Ascending aorta (tissue), 2 donors: ENCODE measurements at regions of chr2 and their contacts with region 1.

Region 1: GRCh38 chr2:96816128-96816835 is at the start of gene CNNM3:
- DNase-seq: peak; percentile 87 to 98
- H3K4me3 ChIP-seq: peak within 1 kb of the TSS; percentile 88 to 98
- H3K27ac ChIP-seq: peak within 1 kb of the TSS; percentile 76 to 99
- H3K4me1 ChIP-seq: peaks cover 12 to 41% of the 10 kb centered on the region in 2 donors
- H3K27me3 ChIP-seq: no peaks in the 10 kb centered on the region
- CTCF ChIP-seq: peak; percentile 70 to 75 (median 71)
- total RNA-seq, gene CNNM3: 24.5 TPM

Region 2: GRCh38 chr2:96265840-96266679 is 550.2 kb before region 1 on chr2 and contains the starts of genes CIAO1 and TMEM127:
- intact Hi-C with region 1: loop called (anchors 10 kb)
- DNase-seq: peak; percentile 95 to 99
- H3K4me3 ChIP-seq: peak within 1 kb of the TSS; percentile 81 to 84
- H3K27ac ChIP-seq: peak within 1 kb of the TSS; percentile 94
- H3K4me1 ChIP-seq: peaks cover 15 to 38% of the 10 kb centered on the region in 2 donors
- H3K27me3 ChIP-seq: no peaks in the 10 kb centered on the region
- CTCF ChIP-seq: peak; percentile 20 to 57 (median 24)
- total RNA-seq, gene CIAO1: 127 TPM
- total RNA-seq, gene TMEM127: 61.9 TPM

Region 3: GRCh38 chr2:96638144-96639121 is 177.8 kb before region 1 on chr2 and contains the start of gene KANSL3:
- intact Hi-C with region 1: loop called (anchors 1 kb)
- DNase-seq: peak; percentile 38 to 93
- H3K4me3 ChIP-seq: peak within 1 kb of the TSS; percentile 85 to 89
- H3K27ac ChIP-seq: peak within 1 kb of the TSS; percentile 95 to 99
- H3K4me1 ChIP-seq: peaks cover 4 to 21% of the 10 kb centered on the region in 2 donors
- H3K27me3 ChIP-seq: no peaks in the 10 kb centered on the region
- CTCF ChIP-seq: peak in 2 of 3 experiments; percentile 10 to 19
- total RNA-seq, gene KANSL3: 56.1 TPM

Region 4: DNA sequence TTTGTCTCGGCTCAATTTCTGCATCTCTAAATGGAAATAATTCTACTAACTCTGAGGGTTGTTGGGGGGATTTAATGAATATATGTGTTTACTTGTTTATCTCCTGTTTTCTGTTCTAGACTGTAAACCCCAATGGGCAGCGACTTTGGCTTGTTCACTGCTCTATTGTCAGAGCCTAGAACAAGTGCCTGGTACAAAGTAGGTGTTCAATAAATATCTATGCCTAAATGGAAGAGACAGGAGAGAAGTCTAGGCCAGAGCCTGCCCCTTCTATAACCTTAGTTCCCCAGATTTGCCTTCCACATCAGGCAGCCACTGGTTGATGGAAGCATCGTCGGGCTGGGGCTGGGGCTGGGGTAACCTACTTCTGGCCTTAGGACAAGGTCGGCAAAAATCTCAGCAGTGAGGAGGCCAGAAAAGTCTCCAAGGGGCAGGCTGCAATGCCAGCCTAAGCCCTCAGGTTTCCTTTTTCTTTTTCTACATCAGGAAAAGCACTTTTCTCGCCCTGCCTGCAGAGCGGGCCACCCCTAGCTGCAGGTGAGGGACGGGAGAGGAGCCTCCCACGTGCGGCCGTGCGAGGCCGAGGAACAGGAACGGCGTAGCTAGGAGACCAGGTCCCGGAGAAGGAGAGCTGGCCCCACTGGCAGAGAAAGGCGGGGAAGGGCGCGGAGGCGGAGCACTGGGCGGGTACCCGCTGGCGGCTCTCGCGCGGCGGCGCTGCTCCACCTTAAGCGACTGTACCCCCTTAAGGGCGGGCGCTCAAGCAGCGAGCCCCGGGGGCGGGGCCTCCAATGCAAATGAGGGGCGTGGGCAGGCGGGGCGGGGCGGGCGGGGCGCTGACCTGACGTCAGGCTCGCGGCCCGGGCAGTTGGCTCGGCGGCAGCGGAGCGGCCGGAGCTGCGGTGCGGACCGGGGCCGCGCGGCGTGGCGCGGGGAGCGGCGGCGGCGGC is 56.0 kb before region 1 on chr2 and contains the start of gene CNNM4:
- intact Hi-C with region 1: loop called (anchors 1 kb)
- DNase-seq: peak; percentile 79 to 97
- H3K4me3 ChIP-seq: peak within 1 kb of the TSS; percentile 64 to 94
- H3K27ac ChIP-seq: peak within 1 kb of the TSS; percentile 64 to 87
- H3K4me1 ChIP-seq: peaks cover 10 to 20% of the 10 kb centered on the region in 2 donors
- H3K27me3 ChIP-seq: no peaks in the 10 kb centered on the region
- CTCF ChIP-seq: no peak
- total RNA-seq, gene CNNM4: 2.7 TPM

Region 5: GRCh38 chr2:96907115-96908041 is 91.1 kb after region 1 on chr2:
- intact Hi-C with region 1: loop called (anchors 1 kb)
- DNase-seq: peak; percentile 77 to 97
- H3K4me3 ChIP-seq: peak overlapping the region; percentile 40 to 56
- H3K27ac ChIP-seq: peak overlapping the region; percentile 95 to 98
- H3K4me1 ChIP-seq: peaks cover 7 to 38% of the 10 kb centered on the region in 2 donors
- H3K27me3 ChIP-seq: no peaks in the 10 kb centered on the region
- CTCF ChIP-seq: peak in 1 of 3 experiments; percentile 21